Activated CD4-positive, alpha-beta T cell treated with anti-CD3 and anti-CD28 coated beads for 36 hours (primary cell): ENCODE measurements at regions of chr18 and their contacts with region 1.

Region 1: DNA sequence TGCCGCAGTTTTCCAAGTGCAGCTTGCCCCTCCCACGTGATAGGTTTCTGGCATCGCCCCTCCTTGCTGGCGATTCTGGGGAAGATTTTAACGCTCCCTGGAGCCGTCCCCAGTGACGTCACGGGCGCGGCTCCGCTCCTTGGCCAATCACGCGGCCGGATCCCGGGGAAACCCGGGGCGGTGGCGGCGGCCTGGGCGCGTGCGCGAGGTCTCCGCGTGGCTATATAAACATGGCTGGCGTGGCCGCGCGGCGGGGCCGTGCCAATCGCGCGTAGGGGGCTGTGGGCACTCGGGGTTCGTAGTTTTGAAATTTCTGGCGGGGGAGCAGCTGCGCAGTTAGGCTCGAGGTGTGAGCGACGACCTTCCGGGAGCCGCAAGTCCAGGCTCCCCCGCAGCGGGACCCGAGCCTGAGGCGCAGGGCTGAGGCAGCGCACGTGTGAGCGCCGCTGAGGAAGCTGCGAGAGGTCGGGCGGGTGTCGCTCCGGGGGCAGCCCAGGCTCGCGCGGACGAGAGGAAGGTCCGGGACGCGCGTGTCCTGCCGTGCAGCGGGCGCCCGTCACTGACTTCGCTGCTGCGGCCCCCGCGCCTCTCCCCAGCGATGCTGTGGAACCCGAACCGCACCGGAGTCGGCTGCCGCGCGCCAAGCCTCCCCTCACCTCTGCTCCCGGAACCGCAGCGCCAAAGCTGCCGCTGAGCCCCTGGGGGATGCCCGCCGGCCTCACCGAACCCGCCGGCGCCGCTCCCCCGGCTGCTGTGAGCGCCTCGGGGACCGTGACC is at the start of gene TAF4B:
- DNase-seq: peak; percentile 97
- ATAC-seq: peak; percentile 84
- H3K4me3 Mint-ChIP-seq: peak within 1 kb of the TSS; percentile 94
- H3K27ac Mint-ChIP-seq: peak within 1 kb of the TSS; percentile 93
- H3K4me1 Mint-ChIP-seq: peaks cover 34% of the 10 kb centered on the region
- H3K27me3 Mint-ChIP-seq: no peaks in the 10 kb centered on the region
- total RNA-seq, gene TAF4B: 18.7 to 24.0 TPM

Region 2: DNA sequence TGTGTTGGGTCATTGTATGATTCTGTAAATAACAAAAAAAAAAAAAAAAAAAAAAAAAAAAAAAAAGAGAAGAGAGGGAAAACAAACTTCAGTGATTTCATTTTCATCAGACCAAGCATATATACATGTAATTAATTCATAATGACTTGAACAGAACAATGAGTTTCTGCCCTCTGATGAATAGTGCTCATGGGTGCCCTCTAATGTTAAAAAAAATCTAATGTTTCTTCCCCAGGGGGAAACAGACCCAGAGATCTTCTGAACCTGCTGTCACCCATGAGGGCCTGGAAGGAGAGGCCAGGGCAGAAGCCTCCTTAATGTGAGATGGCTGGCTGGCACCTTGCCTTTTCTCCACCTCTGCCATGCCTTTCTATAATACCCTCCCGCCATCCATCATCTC is 1163.7 kb before region 1 on chr18:
- CTCF ChIA-PET with region 1: no interaction called
- POLR2A ChIA-PET with region 1: no interaction called
- intact Hi-C with region 1: no loop called
- DNase-seq: no peak
- ATAC-seq: no peak
- H3K4me3 Mint-ChIP-seq: no peak overlapping the region
- H3K27ac Mint-ChIP-seq: no peak overlapping the region
- H3K4me1 Mint-ChIP-seq: no peaks in the 10 kb centered on the region
- H3K27me3 Mint-ChIP-seq: no peaks in the 10 kb centered on the region

Region 3: DNA sequence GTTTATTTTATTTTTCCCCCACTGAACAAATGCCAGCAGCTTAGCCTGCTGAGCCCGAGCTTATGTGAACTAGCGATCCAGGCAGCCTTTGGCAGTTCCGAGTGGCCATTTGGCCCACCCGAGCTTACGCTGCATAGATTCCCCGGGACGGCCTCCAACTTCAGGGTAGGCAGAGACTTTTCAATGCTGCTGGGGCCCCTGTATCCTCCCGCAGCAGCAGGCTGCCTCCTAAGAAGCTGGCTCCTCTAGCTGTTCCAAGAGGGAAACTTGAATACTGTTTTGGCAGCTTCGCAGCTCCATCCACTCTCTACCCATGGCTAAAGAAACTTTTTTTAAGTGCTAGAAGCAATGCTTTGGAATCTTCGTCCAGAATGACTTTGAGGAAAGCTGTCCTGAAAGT is 431.2 kb before region 1 on chr18:
- CTCF ChIA-PET with region 1: no interaction called
- POLR2A ChIA-PET with region 1: interaction called, 15 read pairs
- intact Hi-C with region 1: no loop called
- DNase-seq: no peak
- ATAC-seq: no peak
- H3K4me3 Mint-ChIP-seq: no peak overlapping the region
- H3K27ac Mint-ChIP-seq: no peak overlapping the region
- H3K4me1 Mint-ChIP-seq: no peaks in the 10 kb centered on the region
- H3K27me3 Mint-ChIP-seq: peaks cover 5% of the 10 kb centered on the region

Region 4: GRCh38 chr18:26190506-26190905 is 35.9 kb before region 1 on chr18:
- CTCF ChIA-PET with region 1: no interaction called
- POLR2A ChIA-PET with region 1: no interaction called
- intact Hi-C with region 1: loop called (anchors 1 to 2 kb)
- DNase-seq: peak; percentile 59
- ATAC-seq: peak; percentile 92
- H3K4me3 Mint-ChIP-seq: peak overlapping the region; percentile 71
- H3K27ac Mint-ChIP-seq: peak overlapping the region; percentile 76
- H3K4me1 Mint-ChIP-seq: peaks cover 14% of the 10 kb centered on the region
- H3K27me3 Mint-ChIP-seq: no peaks in the 10 kb centered on the region

Region 5: GRCh38 chr18:26215247-26215970 is 11.0 kb before region 1 on chr18:
- CTCF ChIA-PET with region 1: interaction called, 4 read pairs
- POLR2A ChIA-PET with region 1: interaction called, 8 read pairs
- intact Hi-C with region 1: loop called (anchors 1 kb)
- DNase-seq: peak; percentile 72
- ATAC-seq: peak; percentile 98
- H3K4me3 Mint-ChIP-seq: peak overlapping the region; percentile 65
- H3K27ac Mint-ChIP-seq: peak overlapping the region; percentile 97
- H3K4me1 Mint-ChIP-seq: peaks cover 38% of the 10 kb centered on the region
- H3K27me3 Mint-ChIP-seq: no peaks in the 10 kb centered on the region

Region 6: DNA sequence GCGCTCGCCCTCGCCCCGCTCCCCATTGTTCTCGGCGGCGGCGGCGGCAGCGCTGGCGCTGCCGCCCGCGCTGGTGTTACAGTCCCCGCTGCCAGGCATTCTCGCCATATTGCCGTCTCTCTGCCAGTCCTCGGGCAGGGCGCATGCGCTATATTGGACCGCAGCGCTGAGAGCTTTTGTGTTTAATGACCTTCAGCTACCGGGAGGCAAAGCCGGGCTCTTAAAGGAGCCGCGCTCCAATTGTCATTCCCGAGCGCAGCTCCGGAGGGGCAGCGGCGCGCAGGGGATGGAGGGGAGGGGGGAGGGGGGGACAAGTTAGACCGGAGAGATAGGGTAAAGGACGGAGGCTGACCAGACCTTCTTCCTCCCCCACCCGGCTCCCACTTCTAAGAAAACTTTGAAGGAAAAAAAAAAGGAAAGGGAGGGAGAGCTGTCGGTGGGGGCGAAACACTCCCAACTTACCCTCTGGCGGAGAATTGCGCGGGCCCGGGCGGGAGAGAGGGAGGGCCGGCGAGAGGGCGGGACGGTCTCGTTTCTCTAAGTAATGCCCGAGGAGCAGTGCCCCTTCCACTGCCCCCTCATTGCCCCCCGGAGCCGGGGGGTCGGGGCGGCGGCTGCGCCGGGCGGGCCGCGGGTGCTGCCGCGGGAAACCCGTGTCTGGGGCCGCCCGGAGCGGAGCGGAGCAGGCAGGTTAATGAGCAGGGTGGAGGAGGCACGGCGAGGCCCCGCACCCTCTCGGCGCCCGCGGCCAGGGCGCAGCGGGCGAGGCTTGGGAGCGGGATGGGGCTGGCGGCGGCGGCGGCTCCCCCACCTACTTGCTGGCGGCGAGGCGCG is 322.2 kb after region 1 on chr18 and contains the start of gene KCTD1:
- CTCF ChIA-PET with region 1: no interaction called
- POLR2A ChIA-PET with region 1: no interaction called
- intact Hi-C with region 1: loop called in 1 of 2 experiments (anchors 10 kb)
- DNase-seq: peak; percentile 87
- ATAC-seq: peak; percentile 80
- H3K4me3 Mint-ChIP-seq: peak within 1 kb of the TSS; percentile 73
- H3K27ac Mint-ChIP-seq: no peak within 1 kb of the TSS
- H3K4me1 Mint-ChIP-seq: peaks cover 28% of the 10 kb centered on the region
- H3K27me3 Mint-ChIP-seq: peaks cover 38% of the 10 kb centered on the region
- total RNA-seq, gene KCTD1: 3.2 to 4.2 TPM